ENCODE measurements at regions of chr18 and their contacts with region 1.

Region 1: DNA sequence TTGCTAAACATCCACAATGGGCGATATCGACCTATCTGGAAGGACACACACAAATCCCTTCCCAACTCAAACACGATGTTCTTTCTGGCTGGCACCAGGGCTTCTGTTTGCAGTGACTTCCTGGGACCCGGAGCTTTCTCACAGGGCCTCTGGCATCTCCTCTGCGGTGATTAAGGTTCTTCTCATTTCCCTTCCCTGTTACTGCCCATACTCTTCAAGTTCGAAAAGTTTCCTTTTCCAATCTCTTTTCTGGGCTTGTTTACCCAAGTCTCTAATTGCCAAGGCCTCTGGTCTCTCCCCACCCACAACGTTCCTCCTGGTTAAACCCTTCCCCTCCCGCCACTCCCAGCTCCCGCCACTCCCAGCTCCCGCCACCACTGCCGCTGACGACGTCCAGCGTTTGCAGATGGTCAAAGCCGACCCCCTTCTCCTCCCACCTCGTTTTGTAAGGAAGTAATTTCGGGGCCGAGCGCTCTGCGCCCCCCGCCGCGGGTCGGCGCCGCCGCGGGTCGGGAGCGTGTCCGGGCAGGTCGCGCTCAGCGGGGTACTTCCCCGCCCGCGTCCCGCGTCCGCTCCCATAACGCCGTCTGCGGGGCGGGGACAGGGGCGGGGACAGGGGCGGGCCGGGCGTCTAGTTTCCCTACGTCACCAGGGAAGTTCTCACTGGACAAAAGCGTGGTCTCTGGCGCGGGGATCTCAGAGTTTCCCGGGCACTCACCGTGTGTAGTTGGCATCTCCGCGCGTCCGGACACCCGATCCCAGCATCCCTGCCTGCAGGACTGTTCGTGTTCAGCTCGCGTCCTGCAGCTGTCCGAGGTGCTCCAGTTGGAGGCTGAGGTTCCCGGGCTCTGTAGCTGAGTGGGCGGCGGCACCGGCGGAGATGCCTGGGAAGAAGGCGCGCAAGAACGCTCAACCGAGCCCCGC is at the start of gene PMAIP1:
- DNase-seq: peak; percentile 92
- ATAC-seq: peak; percentile 65
- H3K4me3 Mint-ChIP-seq: peak within 1 kb of the TSS; percentile 86
- H3K27ac Mint-ChIP-seq: peak within 1 kb of the TSS; percentile 95
- H3K4me1 Mint-ChIP-seq: peaks cover 31% of the 10 kb centered on the region
- H3K27me3 Mint-ChIP-seq: no peaks in the 10 kb centered on the region
- total RNA-seq, gene PMAIP1: 58.7 to 97.2 TPM

Region 2: DNA sequence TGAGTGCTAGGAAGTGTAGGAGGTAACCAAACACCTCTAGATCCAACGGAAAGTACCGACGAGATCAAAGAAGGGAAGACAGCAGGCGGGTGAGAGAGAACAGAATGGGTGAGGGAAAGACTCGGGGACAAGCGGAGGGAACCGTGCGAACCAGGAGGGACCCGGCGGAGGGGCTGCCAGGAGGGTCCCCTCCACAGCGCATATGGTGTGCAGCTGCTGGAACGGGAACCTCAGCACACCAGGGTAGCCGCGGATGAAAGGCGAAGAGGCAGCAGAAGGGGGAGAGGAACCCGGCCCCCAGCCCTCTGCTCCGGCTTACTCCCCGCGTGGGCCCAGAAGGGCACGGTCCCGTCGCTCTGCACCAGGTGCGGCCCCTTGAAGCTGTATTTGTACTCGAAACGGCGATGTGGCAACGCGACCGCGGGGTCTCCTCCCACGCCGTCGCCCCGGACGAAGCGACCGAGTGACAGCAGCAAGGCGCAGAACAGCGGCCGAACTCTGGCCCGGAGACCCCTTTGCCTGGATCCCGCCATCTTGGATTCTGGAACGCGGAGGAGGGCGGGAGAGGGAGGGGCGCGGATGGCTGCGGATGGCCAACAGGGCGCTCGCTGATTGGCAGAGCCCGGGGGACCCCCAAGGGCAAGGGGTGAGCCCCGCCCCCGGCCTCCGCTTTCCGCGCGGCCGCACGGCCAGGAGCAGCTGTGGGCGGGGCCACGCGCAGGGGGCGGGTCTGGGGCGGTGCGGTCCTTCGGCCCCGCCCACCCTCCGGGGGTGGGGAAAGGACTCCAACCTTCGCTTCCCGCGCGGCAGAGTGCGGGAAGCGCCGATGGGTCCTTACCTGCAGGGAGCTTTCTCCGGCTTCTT is 540.6 kb before region 1 on chr18 and contains the start of gene LMAN1:
- CTCF ChIA-PET with region 1: no interaction called
- POLR2A ChIA-PET with region 1: no interaction called
- intact Hi-C with region 1: loop called in 1 of 2 experiments (anchors 2 kb)
- DNase-seq: peak; percentile 97
- ATAC-seq: peak; percentile 93
- H3K4me3 Mint-ChIP-seq: peak within 1 kb of the TSS; percentile 98
- H3K27ac Mint-ChIP-seq: peak within 1 kb of the TSS; percentile 99
- H3K4me1 Mint-ChIP-seq: peaks cover 29% of the 10 kb centered on the region
- H3K27me3 Mint-ChIP-seq: no peaks in the 10 kb centered on the region
- total RNA-seq, gene LMAN1: 121 to 134 TPM

Region 3: DNA sequence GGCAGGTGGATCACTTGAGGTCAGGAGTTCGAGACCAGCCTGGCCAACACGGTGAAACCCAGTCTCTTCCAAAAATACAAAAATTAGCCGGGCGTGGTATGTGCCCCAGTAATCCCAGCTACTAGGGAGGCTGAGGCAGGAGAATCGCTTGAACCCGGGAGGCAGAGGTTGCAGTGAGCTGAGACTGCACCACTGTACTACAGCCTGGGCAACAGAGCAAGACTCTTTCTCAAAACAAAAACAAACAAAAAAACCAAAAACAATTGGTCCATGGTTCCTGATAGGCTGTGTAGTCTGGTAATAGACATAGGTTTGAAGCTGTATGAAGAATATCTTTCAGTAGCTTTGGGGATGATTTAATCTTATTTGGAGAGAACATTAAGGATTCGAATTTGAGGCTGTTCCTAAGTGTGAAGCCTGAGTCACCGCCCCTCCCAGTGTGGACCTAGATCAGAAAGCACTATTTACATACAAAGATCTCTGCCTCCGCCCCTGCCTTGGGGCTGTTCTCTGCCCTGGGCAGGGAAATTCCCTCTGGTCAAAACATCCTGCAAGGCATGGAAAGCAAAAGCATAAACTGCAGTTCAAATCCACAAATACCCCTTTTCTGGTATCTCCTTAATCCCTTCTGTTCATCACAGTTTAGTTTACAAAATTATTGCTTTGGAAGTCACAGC is 52.6 kb before region 1 on chr18:
- CTCF ChIA-PET with region 1: no interaction called
- POLR2A ChIA-PET with region 1: interaction called, 4 read pairs
- intact Hi-C with region 1: loop called in 1 of 2 experiments (anchors 2 kb)
- DNase-seq: peak; percentile 81
- ATAC-seq: peak; percentile 99
- H3K4me3 Mint-ChIP-seq: no peak overlapping the region
- H3K27ac Mint-ChIP-seq: peak overlapping the region; percentile 64
- H3K4me1 Mint-ChIP-seq: peaks cover 16% of the 10 kb centered on the region
- H3K27me3 Mint-ChIP-seq: no peaks in the 10 kb centered on the region

Region 4: GRCh38 chr18:59927246-59927825 is 27.8 kb after region 1 on chr18:
- CTCF ChIA-PET with region 1: interaction called, 5 read pairs
- POLR2A ChIA-PET with region 1: interaction called, 33 read pairs
- intact Hi-C with region 1: loop called (anchors 1 kb)
- DNase-seq: peak; percentile 70
- ATAC-seq: peak; percentile 90
- H3K4me3 Mint-ChIP-seq: peak overlapping the region; percentile 47
- H3K27ac Mint-ChIP-seq: peak overlapping the region; percentile 93
- H3K4me1 Mint-ChIP-seq: peaks cover 37% of the 10 kb centered on the region
- H3K27me3 Mint-ChIP-seq: no peaks in the 10 kb centered on the region

Region 5: GRCh38 chr18:60202708-60203107 is 303.1 kb after region 1 on chr18:
- CTCF ChIA-PET with region 1: no interaction called
- POLR2A ChIA-PET with region 1: no interaction called
- intact Hi-C with region 1: no loop called
- DNase-seq: no peak
- ATAC-seq: no peak
- H3K4me3 Mint-ChIP-seq: no peak overlapping the region
- H3K27ac Mint-ChIP-seq: no peak overlapping the region
- H3K4me1 Mint-ChIP-seq: no peaks in the 10 kb centered on the region
- H3K27me3 Mint-ChIP-seq: no peaks in the 10 kb centered on the region